Vagina (tissue), 2 donors: ENCODE measurements at regions of chr14 and their contacts with region 1.

Region 1: GRCh38 chr14:95408731-95409476 is 89.2 kb upstream of the CLMN start:
- DNase-seq: no peak
- H3K4me3 ChIP-seq: no peak overlapping the region
- H3K27ac ChIP-seq: peak overlapping the region; percentile 62
- H3K4me1 ChIP-seq: peaks cover 20% of the 10 kb centered on the region
- H3K27me3 ChIP-seq: no peaks in the 10 kb centered on the region
- CTCF ChIP-seq: no peak
- POLR2A ChIP-seq: no peak

Region 2: DNA sequence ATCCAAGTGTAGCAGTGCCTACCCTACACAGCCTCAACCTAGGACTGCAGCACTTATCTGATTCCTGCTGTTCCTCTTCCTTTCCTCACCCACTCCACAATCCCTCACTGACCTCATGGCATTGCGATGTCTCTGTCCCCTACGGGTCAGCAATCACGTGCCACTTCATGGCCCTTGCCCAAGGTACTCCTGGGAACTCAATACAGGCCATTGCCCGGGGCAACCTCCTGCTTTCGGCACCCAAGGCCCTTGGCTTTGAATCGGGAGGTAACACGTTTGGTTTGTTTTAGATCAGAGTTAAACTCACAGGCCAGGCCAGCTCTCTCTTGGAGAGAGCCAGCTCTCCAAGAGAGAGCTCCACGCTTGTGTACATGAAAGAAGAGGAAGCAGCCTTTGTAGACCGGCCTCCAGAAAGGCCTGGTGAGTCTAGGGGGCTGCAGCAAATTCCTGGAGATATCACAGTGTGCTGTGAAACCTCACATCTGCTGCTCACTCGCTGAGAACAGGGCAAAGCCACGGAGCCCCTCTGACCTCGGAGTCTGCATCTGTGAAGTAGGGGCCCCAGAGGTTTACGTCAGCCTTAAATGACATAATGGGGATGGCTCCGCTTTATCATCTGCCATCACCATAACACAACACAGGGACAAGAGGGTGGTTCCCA is 101.4 kb before region 1 on chr14:
- intact Hi-C with region 1: loop called (anchors 10 kb)
- DNase-seq: no peak
- H3K4me3 ChIP-seq: no peak overlapping the region
- H3K27ac ChIP-seq: no peak overlapping the region
- H3K4me1 ChIP-seq: peaks cover 10% of the 10 kb centered on the region
- H3K27me3 ChIP-seq: no peaks in the 10 kb centered on the region
- CTCF ChIP-seq: no peak
- POLR2A ChIP-seq: no peak